WTC11 (cell line): ENCODE measurements at regions of chr15 and their contacts with region 1.

Region 1: DNA sequence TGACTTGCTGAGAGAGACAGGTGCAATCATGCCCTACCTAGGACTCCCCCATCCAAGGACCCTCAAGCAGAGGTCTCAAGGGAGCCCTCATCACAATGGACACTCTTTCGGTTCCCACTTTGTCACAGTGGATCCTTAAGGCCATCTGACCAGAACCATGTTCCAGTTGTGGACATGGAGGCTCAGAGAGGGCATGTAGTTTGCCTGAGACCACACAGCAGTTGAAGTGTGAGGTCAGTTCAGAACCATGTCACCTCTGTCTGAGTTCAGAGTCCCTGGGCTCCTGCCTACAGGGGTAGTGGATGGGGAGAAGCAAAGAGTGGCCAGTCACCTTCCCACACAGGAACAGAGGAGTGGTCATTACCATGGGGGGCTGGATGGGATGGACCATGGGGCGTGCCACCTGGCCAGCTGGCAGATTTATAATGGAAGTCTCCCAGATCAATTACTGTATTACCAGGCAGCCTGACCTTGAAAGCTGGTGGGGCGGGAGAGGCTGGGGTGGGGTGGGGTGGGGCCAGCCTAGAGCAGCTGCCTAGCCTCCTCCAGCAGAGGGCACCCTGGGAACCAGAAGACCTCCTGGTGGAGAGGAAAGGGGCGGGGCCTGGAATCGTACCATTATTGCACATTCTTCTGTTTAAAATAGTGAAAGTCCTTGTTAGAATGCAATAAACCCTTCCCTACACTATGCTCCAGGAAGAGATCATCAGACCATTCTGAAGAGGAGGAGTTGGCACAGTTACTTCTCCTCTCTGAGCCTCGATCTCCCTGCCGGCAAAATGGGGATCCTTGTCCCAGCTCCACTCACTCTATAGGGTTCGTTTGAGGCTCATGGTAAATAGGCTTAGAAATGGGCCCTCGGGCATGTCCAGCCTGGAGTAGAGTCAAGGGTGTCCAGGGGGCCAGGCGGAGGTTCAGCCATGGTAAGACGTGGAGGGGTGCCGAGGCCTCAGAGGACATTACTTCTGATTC is 26.9 kb upstream of the LINGO1 start:
- DNase-seq: peak; percentile 77
- ATAC-seq: peak; percentile 46
- H3K4me3 Mint-ChIP-seq: no peak overlapping the region
- H3K27ac Mint-ChIP-seq: no peak overlapping the region
- H3K4me1 Mint-ChIP-seq: peaks cover 29% of the 10 kb centered on the region
- H3K27me3 Mint-ChIP-seq: no peaks in the 10 kb centered on the region; the same call in 1 of the 2 replicates
- CTCF ChIP-seq: no peak

Region 2: GRCh38 chr15:77387365-77388105 is 272.1 kb before region 1 on chr15:
- CTCF ChIA-PET with region 1: no interaction called
- POLR2A ChIA-PET with region 1: no interaction called
- DNase-seq: no peak
- ATAC-seq: no peak
- H3K4me3 Mint-ChIP-seq: no peak overlapping the region
- H3K27ac Mint-ChIP-seq: no peak overlapping the region
- H3K4me1 Mint-ChIP-seq: peaks cover 21% of the 10 kb centered on the region
- H3K27me3 Mint-ChIP-seq: no peaks in the 10 kb centered on the region
- CTCF ChIP-seq: no peak

Region 3: DNA sequence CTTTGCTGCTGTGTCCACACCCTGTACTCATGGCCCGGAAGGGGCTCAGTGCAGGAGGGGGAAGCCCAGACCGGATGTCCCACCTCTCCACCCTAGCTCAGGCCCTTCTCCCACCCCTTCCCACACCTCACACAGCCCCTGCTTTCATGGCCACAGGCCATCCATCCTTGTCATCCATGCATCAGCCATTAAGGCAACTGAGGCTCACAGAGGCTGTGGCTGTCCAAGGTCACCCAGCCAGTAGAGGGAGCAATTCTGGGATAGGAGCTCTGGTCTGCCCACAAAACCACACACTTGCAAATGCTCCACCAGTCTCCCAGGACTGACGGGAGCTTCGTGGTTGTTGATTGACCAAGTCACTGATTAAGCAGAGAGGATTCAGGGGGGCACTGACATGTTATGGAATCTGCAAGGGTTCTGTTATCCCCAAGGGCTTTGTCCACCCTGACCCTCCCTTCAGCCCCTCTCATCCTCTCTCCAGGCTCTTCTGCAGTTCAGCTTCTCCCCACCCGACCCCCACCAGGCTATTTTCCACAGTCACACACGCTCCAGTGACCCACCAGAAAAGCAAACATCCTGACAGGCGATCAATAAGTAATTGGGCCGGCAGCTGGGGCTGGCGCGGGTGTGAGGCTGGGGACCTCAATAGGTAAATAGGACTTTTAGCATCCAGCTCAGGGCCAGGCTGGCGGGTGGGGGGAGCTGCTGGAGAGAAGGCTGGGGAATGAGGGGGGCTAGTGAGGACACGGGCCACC is 42.0 kb before region 1 on chr15:
- CTCF ChIA-PET with region 1: interaction called, 13 read pairs
- POLR2A ChIA-PET with region 1: no interaction called
- DNase-seq: peak; percentile 56
- ATAC-seq: peak; percentile 49
- H3K4me3 Mint-ChIP-seq: no peak overlapping the region
- H3K27ac Mint-ChIP-seq: no peak overlapping the region; the same call in 1 of the 2 replicates
- H3K4me1 Mint-ChIP-seq: peaks cover 41% of the 10 kb centered on the region
- H3K27me3 Mint-ChIP-seq: no peaks in the 10 kb centered on the region; the same call in 1 of the 2 replicates
- CTCF ChIP-seq: peak; percentile 19; the same call in 1 of the 2 replicates

Region 4: DNA sequence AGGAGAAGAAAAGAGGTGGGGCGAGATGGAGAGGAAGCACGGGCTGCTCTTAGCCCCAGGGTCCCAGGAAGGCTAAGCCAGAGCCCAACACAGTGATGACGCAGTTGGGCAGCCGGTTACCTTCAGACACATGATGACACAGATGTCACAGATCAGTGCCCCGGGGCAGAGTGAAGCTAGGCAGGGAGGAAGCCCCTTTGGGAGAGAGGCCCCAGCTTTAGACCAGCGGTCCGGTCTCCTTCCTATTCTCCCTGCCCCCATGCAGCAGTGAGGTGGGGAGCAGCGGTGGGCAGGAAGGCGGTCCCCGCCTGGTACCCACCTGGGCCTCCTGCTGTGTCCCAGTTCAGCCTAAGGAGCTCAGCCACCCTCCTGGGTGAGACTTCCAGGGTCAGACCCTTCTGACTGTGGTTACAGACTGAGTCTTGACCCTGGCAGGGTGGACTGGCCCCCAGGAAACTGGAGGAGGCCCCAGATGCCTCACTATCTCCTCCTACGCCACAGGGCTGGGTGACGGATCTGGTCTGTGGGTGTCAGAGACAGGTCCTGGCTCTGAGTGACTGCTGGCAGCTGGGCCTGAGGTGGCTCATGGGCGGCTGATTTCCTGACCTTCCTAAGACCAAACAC is 11.8 kb after region 1 on chr15:
- CTCF ChIA-PET with region 1: interaction called, 13 read pairs
- POLR2A ChIA-PET with region 1: no interaction called
- DNase-seq: no peak
- ATAC-seq: no peak
- H3K4me3 Mint-ChIP-seq: no peak overlapping the region
- H3K27ac Mint-ChIP-seq: no peak overlapping the region
- H3K4me1 Mint-ChIP-seq: no peaks in the 10 kb centered on the region
- H3K27me3 Mint-ChIP-seq: no peaks in the 10 kb centered on the region
- CTCF ChIP-seq: no peak

Region 5: GRCh38 chr15:77830051-77830477 is 170.4 kb after region 1 on chr15:
- CTCF ChIA-PET with region 1: interaction called, 11 read pairs
- POLR2A ChIA-PET with region 1: no interaction called
- DNase-seq: no peak
- ATAC-seq: no peak
- H3K4me3 Mint-ChIP-seq: no peak overlapping the region
- H3K27ac Mint-ChIP-seq: no peak overlapping the region
- H3K4me1 Mint-ChIP-seq: peaks cover 8% of the 10 kb centered on the region; the same call in 1 of the 2 replicates
- H3K27me3 Mint-ChIP-seq: no peaks in the 10 kb centered on the region; the same call in none of the 2 replicates
- CTCF ChIP-seq: no peak

Region 6: DNA sequence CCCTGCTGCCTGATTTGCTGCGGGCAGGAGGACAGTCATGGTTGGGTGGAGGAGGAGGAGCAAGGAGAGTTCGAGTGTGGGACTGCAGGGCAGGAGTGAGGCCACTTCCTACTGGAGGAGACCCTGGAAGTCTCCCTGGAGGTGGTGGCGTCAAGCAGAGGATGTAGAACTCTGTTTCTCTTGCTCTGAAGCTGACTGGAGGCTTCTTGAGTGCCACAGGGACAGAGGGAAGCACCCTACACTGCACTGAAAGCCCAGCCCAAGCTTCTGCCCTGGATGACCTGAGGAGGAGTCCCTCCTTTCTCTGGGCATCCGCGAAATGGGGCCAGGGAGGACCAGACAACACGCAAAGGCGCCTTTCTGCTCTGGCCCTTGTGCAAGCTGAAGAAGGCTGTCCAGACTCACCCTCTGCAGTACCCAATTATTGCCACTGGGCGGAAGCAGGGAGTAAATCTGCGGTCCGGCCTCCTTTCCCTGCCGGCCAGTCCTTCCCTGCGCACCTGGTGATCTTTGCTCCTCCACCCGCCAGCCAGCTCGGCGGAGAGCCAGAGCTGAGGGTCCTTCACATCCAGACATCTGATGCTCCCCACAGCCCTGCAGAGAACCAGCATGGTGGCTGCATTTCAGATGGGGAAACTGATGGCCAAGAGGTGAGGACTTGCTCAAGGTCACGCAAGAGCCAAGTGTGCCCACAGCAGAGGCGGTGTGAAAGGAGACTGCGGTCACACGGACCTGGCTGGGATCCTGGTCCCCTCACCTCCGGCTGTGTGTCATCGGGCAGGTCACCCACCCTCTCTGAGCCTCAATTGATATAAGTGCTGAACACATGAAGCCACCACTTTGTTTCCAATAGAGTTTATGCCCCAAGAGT is 210.8 kb after region 1 on chr15:
- CTCF ChIA-PET with region 1: interaction called, 12 read pairs
- POLR2A ChIA-PET with region 1: no interaction called
- DNase-seq: peak; percentile 92
- ATAC-seq: peak; percentile 78
- H3K4me3 Mint-ChIP-seq: no peak overlapping the region
- H3K27ac Mint-ChIP-seq: no peak overlapping the region
- H3K4me1 Mint-ChIP-seq: peaks cover 4% of the 10 kb centered on the region; the same call in 1 of the 2 replicates
- H3K27me3 Mint-ChIP-seq: no peaks in the 10 kb centered on the region; the same call in none of the 2 replicates
- CTCF ChIP-seq: peak; percentile 90

Region 7: GRCh38 chr15:78007911-78008886 is 348.6 kb after region 1 on chr15:
- CTCF ChIA-PET with region 1: no interaction called
- POLR2A ChIA-PET with region 1: no interaction called
- DNase-seq: no peak
- ATAC-seq: no peak
- H3K4me3 Mint-ChIP-seq: no peak overlapping the region
- H3K27ac Mint-ChIP-seq: no peak overlapping the region; the same call in 1 of the 2 replicates
- H3K4me1 Mint-ChIP-seq: peaks cover 10% of the 10 kb centered on the region
- H3K27me3 Mint-ChIP-seq: no peaks in the 10 kb centered on the region
- CTCF ChIP-seq: no peak

Region 8: DNA sequence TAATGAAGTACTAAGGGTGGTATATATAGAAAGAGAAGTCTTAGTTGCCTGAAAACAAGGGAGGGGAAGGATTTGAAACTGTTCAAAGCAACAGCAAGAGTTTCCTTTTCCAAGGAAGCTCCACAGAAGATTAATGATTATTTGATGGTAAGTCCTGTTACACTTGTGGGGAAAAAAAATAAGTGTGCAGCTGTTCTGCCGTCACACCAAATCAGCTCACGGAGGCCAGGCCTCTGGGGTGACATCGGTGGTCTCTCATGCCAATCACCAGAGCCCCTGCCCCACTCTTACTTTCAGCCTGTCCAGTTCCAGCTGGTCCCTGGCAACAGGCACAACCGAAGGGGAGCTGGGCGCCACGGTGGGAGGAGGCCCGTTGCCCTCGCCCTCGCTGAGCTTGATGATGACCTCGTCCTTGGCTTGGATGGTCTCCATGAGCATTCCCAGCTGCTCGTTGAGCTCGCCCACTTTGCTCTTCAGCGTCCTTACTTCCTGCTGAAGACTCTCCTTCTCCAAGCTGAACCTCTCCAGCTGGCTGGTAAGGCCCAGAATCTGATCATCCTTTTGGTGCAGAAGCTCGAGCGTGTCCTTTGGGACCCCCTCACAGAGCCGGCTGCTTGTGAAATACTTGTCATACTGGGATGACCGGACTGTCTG is 364.4 kb after region 1 on chr15:
- CTCF ChIA-PET with region 1: no interaction called
- POLR2A ChIA-PET with region 1: no interaction called
- DNase-seq: no peak
- ATAC-seq: no peak
- H3K4me3 Mint-ChIP-seq: no peak overlapping the region
- H3K27ac Mint-ChIP-seq: no peak overlapping the region
- H3K4me1 Mint-ChIP-seq: peaks cover 6% of the 10 kb centered on the region; the same call in 1 of the 2 replicates
- H3K27me3 Mint-ChIP-seq: no peaks in the 10 kb centered on the region
- CTCF ChIP-seq: no peak